ENCODE measurements at regions of chr13 and their contacts with region 1.

Region 1: DNA sequence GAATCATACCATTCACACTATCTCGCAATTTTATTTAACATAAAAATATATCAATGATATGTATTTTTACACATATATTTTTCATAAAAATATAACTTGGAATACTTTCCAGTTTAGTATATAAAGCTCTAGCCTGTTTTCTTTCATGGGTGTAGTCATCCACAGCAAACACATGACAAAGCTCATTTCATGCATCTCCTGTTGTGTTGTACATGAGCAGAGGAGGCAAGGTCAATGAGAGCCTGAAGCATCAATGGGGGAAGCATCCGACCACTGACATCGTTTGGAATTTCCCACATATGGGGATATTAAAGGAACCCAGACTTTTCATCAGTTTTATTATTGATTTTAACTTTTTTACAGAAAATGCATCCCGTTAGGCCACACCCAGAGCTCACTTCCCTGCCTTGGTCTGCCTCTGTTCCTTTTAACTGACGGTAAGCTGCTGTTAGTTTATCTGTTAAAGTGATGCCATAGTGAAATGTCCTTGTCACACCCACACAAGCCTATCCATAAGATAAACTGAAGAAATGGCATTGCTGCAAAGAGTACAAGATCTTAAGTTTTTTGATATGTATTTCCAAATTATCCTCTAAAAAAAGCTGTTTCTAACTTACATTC is 44.0 kb downstream of the MIPEP start:
- DNase-seq: no peak
- H3K4me3 ChIP-seq: no peak overlapping the region
- H3K27ac ChIP-seq: no peak overlapping the region
- H3K4me1 ChIP-seq: peaks cover 0 to 15% of the 10 kb centered on the region in 2 experiments; a peak in 2 of 4 replicates
- H3K27me3 ChIP-seq: no peaks in the 10 kb centered on the region
- CTCF ChIP-seq: no peak
- EP300 ChIP-seq: no peak
- RAD21 ChIP-seq: no peak

Region 2: GRCh38 chr13:23828866-23829265 is 16.3 kb before region 1 on chr13:
- CTCF ChIA-PET with region 1: interaction called, 11 read pairs
- POLR2A ChIA-PET with region 1: no interaction called
- DNase-seq: no peak
- H3K4me3 ChIP-seq: no peak overlapping the region
- H3K27ac ChIP-seq: no peak overlapping the region
- H3K4me1 ChIP-seq: no peaks in the 10 kb centered on the region
- H3K27me3 ChIP-seq: no peaks in the 10 kb centered on the region
- CTCF ChIP-seq: no peak
- EP300 ChIP-seq: no peak
- RAD21 ChIP-seq: no peak